ENCODE measurements at regions of chr17 and their contacts with region 1.

Region 1: DNA sequence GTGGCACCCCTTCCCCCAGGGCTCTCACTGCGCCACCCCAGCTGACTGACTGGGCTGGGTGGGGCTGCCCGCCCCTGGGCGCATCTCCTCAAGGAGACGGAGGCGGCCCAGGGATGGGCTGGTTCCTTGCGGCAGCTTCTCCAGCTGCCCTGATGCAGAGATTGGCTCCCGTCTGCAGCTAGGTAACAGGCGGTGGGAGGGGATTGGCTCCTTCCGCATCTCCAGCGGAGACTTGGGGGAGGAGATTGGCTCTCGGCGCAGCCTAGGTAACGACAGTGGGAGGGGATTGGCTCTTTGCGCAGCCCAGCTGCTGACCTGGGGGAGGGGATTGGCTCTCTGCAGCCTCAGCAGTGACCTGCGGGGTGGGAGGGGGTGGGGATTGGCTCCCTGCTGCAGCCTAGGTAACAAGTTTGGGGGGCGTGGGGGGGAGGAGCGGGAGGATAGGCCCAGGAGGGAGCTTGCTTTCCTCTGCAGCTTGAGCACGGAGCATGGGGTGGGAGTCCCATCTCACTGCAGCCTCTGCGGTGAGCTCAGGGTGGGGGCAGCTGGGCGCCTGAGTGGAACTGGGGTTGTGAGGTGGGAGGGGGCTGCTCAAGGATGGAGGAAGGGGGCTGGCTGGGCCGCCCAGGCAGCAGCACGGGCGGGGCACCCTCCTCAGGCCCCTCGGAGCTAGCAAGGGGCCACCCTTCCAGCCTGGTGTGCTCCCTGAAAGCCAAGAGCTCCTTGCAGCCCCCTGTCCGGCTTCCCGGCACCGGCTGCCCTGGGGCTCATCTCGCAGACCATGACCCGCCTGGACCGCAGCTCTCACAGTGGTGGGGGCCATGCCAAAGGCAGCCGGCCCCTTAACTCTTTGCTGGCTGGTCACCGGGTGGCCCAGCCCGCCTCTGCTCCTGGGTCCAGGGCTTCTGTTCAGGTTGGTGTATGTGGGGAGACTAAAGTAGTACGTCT is 6.4 kb downstream of the NFE2L1 start:
- DNase-seq: no peak
- ATAC-seq: no peak
- H3K4me3 ChIP-seq: no peak overlapping the region
- H3K4me3 Mint-ChIP-seq: no peak overlapping the region
- H3K27ac ChIP-seq: no peak overlapping the region
- H3K27ac Mint-ChIP-seq: no peak overlapping the region
- H3K4me1 ChIP-seq: peaks cover 29% of the 10 kb centered on the region
- H3K4me1 Mint-ChIP-seq: peaks cover 48% of the 10 kb centered on the region
- H3K27me3 ChIP-seq: no peaks in the 10 kb centered on the region
- H3K27me3 Mint-ChIP-seq: no peaks in the 10 kb centered on the region
- CTCF ChIP-seq: no peak

Region 2: GRCh38 chr17:48037036-48037837 is 17.3 kb before region 1 on chr17 and contains the start of gene COPZ2:
- CTCF ChIA-PET with region 1: interaction called, 13 read pairs
- POLR2A ChIA-PET with region 1: no interaction called
- intact Hi-C with region 1: no loop called
- DNase-seq: peak in 8 of 9 experiments; percentile 51 to 83 (median 72)
- ATAC-seq: peak; percentile 98
- H3K4me3 ChIP-seq: peak within 1 kb of the TSS; percentile 70 to 73
- H3K4me3 Mint-ChIP-seq: peak within 1 kb of the TSS; percentile 87
- H3K27ac ChIP-seq: no peak within 1 kb of the TSS
- H3K27ac Mint-ChIP-seq: no peak within 1 kb of the TSS
- H3K4me1 ChIP-seq: no peaks in the 10 kb centered on the region
- H3K4me1 Mint-ChIP-seq: peaks cover 6% of the 10 kb centered on the region
- H3K27me3 ChIP-seq: peaks cover 0 to 15% of the 10 kb centered on the region in 2 experiments
- H3K27me3 Mint-ChIP-seq: peaks cover 29% of the 10 kb centered on the region
- CTCF ChIP-seq: peak; percentile 83
- total RNA-seq, gene COPZ2: 0.57 to 0.92 TPM

Region 3: DNA sequence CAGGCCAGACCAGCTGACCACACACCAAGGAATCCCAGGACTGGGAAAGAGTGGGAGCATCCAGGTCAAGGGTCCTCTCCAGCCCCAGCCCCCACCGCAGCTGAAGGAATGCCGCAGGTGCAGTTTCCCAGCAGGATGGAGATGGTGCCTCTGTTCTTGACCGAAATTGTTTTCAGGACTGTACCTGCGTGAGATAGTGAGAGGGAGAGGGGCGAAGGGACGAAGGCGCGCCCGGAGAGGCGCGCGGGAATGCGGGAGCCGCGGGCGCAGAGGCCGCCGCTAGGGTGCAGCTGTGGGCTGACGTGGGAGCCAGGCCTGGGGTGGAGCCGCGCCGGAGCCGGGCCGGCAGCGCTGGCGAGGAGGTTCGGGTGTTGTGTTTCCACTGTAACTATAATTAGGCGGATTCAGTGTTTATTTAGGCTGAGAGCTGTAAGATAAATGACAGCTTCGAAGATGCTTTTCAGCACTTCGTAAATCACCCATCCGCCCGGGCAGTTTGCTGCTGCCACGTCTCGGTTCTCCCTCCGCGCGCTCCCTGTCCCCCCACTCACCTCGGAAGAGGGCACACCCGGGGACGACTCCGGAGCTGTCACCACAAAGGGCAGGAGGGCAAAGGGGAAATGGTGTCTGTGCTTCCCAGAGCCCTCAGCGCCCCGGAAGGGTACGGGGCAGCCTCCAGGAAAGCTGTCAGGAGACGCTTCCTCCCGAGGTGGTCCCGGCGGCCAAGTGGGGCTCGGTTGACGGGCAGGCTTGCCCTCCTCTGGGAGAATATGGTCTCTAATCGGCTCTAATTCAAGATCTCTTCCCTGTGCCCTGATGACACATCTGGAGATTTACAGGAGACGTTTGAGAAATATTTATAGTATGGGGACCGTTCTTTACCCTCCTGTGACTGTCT is 438.1 kb after region 1 on chr17:
- CTCF ChIA-PET with region 1: no interaction called
- POLR2A ChIA-PET with region 1: no interaction called
- intact Hi-C with region 1: no loop called
- DNase-seq: peak; percentile 49 to 80 (median 67)
- ATAC-seq: peak; percentile 96
- H3K4me3 ChIP-seq: peak overlapping the region; percentile 38 to 41
- H3K4me3 Mint-ChIP-seq: peak overlapping the region; percentile 61
- H3K27ac ChIP-seq: no peak overlapping the region
- H3K27ac Mint-ChIP-seq: no peak overlapping the region
- H3K4me1 ChIP-seq: no peaks in the 10 kb centered on the region
- H3K4me1 Mint-ChIP-seq: peaks cover 5% of the 10 kb centered on the region
- H3K27me3 ChIP-seq: peaks cover 0 to 7% of the 10 kb centered on the region in 2 experiments
- H3K27me3 Mint-ChIP-seq: peaks cover 26% of the 10 kb centered on the region
- CTCF ChIP-seq: peak; percentile 83

Measured in CD8-positive, alpha-beta T cell (primary cell).